Activated CD4-positive, alpha-beta T cell treated with anti-CD3 and anti-CD28 coated beads for 36 hours (primary cell): ENCODE measurements at regions of chr6 and their contacts with region 1.

Region 1: DNA sequence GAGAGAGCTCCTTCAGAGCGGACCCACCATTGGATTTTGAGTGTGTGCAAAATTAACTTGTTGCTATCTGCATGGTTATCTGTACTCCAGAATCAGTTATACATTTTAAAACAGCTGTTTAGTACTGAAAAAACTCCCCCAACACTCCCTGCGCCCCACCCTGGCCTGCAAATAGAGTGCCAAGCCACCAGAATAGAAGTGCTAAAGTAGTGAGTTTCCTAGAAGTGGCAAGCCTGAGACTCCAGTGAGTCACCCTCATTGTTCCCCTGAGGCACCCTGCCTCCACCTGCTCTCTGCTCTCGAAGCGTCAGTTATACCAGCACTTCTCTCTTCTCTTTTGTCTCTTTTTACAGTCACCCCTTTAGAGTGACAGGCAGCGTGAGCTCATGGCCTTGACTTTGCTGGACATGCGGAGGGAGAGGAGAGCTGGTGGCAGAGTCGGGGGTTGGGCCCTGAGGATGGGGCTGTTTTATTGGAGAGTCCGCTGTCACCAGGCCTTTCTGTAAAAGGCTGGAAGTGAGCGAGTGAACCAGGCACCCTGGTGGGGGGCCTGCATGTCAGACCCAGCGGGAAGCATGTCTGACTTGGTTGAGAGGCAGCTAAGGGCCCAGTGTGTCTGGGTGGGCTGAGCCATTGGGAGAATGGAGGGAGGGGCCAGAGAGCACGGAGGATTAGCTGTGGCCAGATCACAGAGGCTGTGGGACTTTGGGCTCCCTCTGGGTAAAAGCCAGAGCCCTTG is 10.4 kb downstream of the IGF2R start:
- DNase-seq: peak; percentile 82
- ATAC-seq: peak; percentile 83
- H3K4me3 Mint-ChIP-seq: peak overlapping the region; percentile 74
- H3K27ac Mint-ChIP-seq: peak overlapping the region; percentile 99
- H3K4me1 Mint-ChIP-seq: peaks cover 96% of the 10 kb centered on the region
- H3K27me3 Mint-ChIP-seq: no peaks in the 10 kb centered on the region

Region 2: DNA sequence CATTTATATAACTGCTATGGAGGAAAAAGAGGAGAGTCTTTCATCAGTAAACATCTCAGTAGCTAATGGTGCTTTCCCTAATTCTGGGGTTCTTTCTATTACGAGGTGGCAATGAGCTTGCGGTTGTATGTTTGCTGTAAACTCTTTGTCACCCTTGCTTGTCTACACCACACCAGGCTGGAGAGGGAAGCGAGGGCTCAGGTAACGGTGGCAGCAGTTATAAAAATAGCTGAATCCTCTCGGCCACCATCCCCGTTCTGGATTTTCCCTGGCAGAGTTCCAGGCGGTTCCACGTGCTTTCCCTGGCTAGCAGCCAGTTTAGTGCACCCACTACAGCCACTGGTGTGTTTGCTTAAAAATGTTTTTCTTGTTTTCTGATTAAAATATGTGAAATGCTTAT is 49.5 kb before region 1 on chr6:
- CTCF ChIA-PET with region 1: no interaction called
- POLR2A ChIA-PET with region 1: no interaction called
- intact Hi-C with region 1: loop called (anchors 1 to 5 kb)
- DNase-seq: peak; percentile 66
- ATAC-seq: peak; percentile 24
- H3K4me3 Mint-ChIP-seq: no peak overlapping the region
- H3K27ac Mint-ChIP-seq: peak overlapping the region; percentile 88
- H3K4me1 Mint-ChIP-seq: peaks cover 34% of the 10 kb centered on the region
- H3K27me3 Mint-ChIP-seq: peaks cover 4% of the 10 kb centered on the region

Region 3: DNA sequence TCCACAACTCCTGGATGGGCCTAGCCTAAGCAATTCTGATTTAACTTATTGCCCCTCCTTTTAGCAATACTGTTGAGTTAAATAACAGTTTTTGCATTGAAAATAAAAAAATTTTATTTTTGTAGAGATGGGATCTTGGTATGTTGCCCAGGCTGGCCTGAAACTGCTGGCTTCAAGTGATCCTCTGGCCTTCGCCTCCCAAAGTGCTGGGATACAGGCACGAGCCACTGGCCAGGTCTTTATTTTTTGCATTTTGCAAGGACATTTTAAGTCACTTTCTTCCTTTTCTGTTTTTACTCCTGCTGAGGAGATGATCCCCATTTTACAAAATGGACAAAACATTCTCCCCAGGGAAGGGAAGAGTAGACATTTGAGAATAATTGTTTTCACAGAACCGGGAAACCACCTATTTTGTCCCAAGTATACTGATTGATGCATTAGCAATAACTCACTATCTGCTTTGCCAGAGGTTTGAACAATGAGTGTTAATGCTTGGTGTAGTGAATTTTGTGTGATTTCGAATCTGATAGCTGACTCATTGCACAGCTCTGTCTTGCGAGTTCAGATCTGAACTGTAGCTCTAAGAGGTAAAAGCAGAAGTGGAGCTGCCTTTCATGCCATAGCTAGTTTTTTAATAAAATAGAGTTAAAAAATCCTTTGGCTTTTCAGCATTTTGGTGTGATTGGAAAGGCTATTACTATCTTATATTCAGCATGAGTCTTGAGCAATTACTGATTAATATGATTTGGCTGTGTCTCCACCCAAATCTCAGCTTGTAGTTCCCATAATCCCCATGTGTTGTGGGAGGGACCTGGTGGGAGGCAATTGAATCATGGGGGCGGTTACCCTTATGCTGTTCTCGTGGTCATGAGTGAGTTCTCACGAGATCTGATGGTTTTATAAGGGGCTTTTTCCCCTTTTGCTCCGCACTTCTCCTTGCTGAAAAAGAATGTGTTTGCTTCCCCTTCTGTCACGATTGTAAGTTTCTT is 10.5 kb after region 1 on chr6:
- CTCF ChIA-PET with region 1: interaction called, 4 read pairs
- POLR2A ChIA-PET with region 1: interaction called, 5 read pairs
- intact Hi-C with region 1: loop called in 1 of 2 experiments (anchors 1 kb)
- DNase-seq: no peak
- ATAC-seq: peak; percentile 90
- H3K4me3 Mint-ChIP-seq: no peak overlapping the region
- H3K27ac Mint-ChIP-seq: peak overlapping the region; percentile 70
- H3K4me1 Mint-ChIP-seq: peaks cover 65% of the 10 kb centered on the region
- H3K27me3 Mint-ChIP-seq: no peaks in the 10 kb centered on the region

Region 4: DNA sequence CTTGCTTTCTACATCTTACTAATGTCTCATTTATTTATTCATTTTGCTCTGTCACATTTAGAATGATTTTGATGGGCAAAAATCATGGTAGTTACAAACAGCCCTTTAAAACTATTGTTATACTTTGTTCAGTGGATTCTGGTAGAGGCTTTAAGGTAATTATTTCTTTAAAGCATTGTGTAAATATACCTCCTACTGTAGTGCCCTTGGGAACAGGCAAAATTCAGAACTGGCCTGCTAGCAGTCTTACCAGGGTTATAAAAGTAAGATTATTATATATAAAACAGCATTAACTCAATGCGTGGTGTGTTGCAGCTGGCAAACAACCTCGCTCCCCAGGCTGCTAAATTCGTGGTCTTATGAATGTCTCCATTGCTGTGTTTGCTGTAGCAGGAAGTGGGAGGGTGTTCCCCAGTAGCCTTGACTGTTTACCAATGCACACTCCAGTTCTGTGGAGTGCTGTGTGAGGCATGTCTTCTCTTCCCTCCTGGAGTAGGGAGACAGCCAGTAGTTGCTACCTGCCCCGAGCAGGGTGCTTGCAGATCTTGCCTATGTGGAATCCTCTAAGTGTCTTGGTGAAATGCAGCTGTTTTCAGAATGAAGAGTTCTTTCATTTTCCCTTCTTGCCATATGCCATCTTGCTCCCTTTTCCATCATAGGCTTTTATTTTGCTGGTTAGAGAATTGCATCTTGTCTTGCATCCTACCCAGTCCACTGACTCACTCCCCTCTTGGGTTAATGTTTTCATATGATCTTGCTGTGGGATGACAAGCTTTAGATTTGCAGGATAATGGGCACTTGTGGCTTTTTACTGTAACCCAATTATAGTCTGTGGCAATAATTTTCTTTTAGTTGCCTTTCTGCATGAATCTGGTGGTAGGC is 34.9 kb after region 1 on chr6:
- CTCF ChIA-PET with region 1: interaction called, 3 read pairs
- POLR2A ChIA-PET with region 1: no interaction called
- intact Hi-C with region 1: loop called (anchors 2 kb)
- DNase-seq: peak; percentile 29
- ATAC-seq: peak; percentile 37
- H3K4me3 Mint-ChIP-seq: peak overlapping the region; percentile 11
- H3K27ac Mint-ChIP-seq: peak overlapping the region; percentile 81
- H3K4me1 Mint-ChIP-seq: peaks cover 55% of the 10 kb centered on the region
- H3K27me3 Mint-ChIP-seq: no peaks in the 10 kb centered on the region

Region 5: DNA sequence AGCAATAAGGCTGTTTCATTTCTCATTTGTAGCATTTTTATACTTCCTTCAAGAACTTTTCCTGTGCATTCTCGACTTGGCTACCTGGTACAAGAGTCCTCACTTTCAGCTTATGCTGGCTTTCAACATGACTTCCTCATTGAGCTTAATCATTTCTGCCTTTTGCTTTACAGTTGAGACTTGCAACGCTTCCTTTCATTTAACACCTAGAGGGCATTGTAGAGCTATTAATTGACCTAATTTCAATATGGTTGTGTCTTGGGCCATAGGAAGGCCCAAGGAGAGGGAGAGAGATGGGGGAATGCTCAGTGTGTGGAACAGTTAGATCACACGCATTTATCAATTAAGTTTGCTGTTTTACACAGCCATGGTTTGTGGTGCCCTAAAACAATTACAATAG is 242.1 kb after region 1 on chr6:
- CTCF ChIA-PET with region 1: no interaction called
- POLR2A ChIA-PET with region 1: no interaction called
- intact Hi-C with region 1: loop called in 1 of 2 experiments (anchors 1 kb)
- DNase-seq: no peak
- ATAC-seq: peak; percentile 30
- H3K4me3 Mint-ChIP-seq: no peak overlapping the region
- H3K27ac Mint-ChIP-seq: no peak overlapping the region
- H3K4me1 Mint-ChIP-seq: peaks cover 10% of the 10 kb centered on the region
- H3K27me3 Mint-ChIP-seq: peaks cover 31% of the 10 kb centered on the region

Region 6: GRCh38 chr6:160462551-160463109 is 483.3 kb after region 1 on chr6:
- CTCF ChIA-PET with region 1: no interaction called
- POLR2A ChIA-PET with region 1: no interaction called
- intact Hi-C with region 1: loop called in 1 of 2 experiments (anchors 5 kb)
- DNase-seq: peak; percentile 63
- ATAC-seq: peak; percentile 80
- H3K4me3 Mint-ChIP-seq: peak overlapping the region; percentile 17
- H3K27ac Mint-ChIP-seq: peak overlapping the region; percentile 65
- H3K4me1 Mint-ChIP-seq: peaks cover 60% of the 10 kb centered on the region
- H3K27me3 Mint-ChIP-seq: peaks cover 34% of the 10 kb centered on the region

Region 7: DNA sequence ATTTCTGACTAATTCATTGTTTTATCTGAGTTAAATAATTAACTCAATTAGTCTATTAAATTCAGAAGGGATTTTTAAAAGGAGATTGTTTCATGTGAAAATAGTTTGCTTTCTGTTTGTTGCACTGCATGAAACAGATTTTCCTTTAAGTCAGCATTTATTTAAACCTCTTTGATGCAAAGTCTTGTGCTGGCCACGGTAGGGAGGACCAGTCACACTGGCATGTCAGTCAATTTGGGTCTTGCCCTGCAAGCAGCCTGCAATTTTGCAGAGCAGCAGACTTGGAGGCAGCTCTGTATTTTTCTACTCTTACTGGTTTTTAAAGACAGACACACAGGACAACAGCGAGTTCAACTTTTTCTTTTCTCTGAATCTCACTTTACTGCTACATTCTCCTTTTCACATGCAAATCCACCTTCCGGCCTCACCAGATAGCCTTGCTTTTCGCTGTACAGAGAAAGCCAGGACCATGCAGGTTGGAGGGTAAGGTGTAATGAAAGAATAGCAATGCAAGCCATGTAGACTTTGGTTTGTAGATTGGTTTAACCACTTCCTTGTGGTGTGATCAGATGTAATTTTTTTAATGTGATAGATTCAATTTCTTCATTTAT is 1984.4 kb after region 1 on chr6:
- CTCF ChIA-PET with region 1: no interaction called
- POLR2A ChIA-PET with region 1: no interaction called
- intact Hi-C with region 1: no loop called
- DNase-seq: no peak
- ATAC-seq: no peak
- H3K4me3 Mint-ChIP-seq: no peak overlapping the region
- H3K27ac Mint-ChIP-seq: no peak overlapping the region
- H3K4me1 Mint-ChIP-seq: no peaks in the 10 kb centered on the region
- H3K27me3 Mint-ChIP-seq: no peaks in the 10 kb centered on the region